Colonic mucosa (tissue), 4 donors: ENCODE measurements at regions of chr10 and their contacts with region 1.

Region 1: GRCh38 chr10:80126876-80127275 is 5.7 kb upstream of the PLAC9 start:
- DNase-seq: no peak
- H3K4me3 ChIP-seq: no peak overlapping the region
- H3K27ac ChIP-seq: no peak overlapping the region
- H3K4me1 ChIP-seq: no peaks in the 10 kb centered on the region
- H3K27me3 ChIP-seq: peaks cover 4% of the 10 kb centered on the region
- CTCF ChIP-seq: no peak

Region 2: GRCh38 chr10:80055760-80056159 is 71.1 kb before region 1 on chr10:
- intact Hi-C with region 1: loop called (anchors 5 kb)
- DNase-seq: no peak
- H3K4me3 ChIP-seq: no peak overlapping the region
- H3K27ac ChIP-seq: no peak overlapping the region
- H3K4me1 ChIP-seq: no peaks in the 10 kb centered on the region
- H3K27me3 ChIP-seq: no peaks in the 10 kb centered on the region
- CTCF ChIP-seq: no peak

Region 3: DNA sequence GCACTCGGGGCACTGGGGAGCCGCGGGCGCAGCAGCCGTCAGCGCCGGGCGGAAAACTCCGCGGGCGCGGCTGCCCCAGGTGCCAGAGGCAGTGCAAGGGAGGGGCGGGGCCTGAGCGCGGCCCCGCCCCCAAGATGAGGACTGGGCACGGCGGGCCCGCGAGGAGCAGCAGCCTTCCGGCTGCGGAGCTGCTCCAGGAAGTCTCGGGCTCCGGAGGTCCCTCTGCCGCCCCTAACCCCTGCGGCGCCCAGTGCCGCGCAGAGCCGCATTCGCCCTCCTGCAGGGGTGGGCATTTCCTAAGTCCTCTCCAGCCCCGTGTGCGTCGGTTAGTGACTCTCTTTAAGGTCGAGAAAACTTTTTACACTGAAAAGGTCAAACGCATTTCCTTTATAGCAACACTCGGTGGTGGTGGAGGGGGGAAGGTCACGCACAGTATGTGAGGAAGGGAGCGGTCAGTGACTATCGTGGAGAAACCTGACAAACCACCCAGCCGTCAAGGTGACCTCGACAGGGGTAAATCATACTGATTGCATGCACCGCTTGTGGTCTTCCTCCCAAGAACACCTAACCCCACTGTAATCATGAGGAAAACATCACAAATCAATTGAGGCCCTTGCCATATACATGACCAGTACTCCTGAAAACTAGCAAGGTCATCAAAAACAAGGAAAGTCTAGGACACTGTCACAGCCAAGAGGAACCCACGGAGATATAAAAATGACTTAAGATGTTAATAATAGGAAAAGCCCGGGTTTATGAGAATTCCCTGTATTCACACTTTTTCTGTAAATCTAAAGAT is 78.8 kb after region 1 on chr10 and contains the start of gene ANXA11:
- intact Hi-C with region 1: no loop called
- DNase-seq: peak; percentile 88
- H3K4me3 ChIP-seq: peak within 1 kb of the TSS; percentile 88
- H3K27ac ChIP-seq: peak within 1 kb of the TSS; percentile 99
- H3K4me1 ChIP-seq: peaks cover 29% of the 10 kb centered on the region
- H3K27me3 ChIP-seq: no peaks in the 10 kb centered on the region
- CTCF ChIP-seq: no peak
- total RNA-seq, gene ANXA11: 271 to 353 TPM

Region 4: GRCh38 chr10:80260295-80261243 is 133.7 kb after region 1 on chr10:
- intact Hi-C with region 1: no loop called
- DNase-seq: peak; percentile 34
- H3K4me3 ChIP-seq: no peak overlapping the region
- H3K27ac ChIP-seq: no peak overlapping the region
- H3K4me1 ChIP-seq: no peaks in the 10 kb centered on the region
- H3K27me3 ChIP-seq: no peaks in the 10 kb centered on the region
- CTCF ChIP-seq: peak; percentile 73